OCI-LY7 (cell line): ENCODE measurements at regions of chr17 and their contacts with region 1.

Region 1: DNA sequence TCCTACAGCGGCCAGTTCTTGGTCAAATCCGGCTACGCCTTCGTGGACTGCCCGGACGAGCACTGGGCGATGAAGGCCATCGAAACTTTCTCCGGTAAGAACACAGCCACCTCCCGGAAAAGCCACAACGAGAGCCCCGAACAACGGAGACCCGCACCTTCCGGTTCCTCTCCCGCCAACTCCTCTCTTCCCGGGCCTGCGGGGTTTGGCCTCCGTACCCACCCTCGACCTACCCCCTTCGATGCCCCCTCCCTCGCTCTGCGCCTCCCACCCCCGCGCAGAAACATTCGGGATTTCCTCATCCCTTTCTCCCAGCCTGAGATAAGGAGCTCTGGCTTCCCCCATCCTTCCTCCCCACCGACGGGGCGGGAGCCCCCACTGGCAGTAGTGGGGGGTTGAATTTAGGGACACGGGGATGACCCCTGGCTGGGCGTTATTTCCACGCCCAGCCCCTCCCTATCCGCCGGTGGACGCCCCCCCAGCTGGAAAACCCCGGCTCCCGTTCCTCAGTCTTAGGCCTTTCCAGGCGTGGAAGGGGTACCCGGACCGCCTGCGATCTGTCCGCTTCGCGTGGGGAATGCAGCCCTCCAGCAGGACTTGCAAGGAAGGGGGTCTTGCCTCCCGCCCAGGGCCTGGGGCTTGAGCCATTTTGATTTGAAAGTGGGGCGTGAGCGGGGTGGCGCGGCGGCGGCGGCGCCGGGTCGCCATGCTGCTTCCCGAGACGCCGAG is 806 bp downstream of the IGF2BP1 start:
- DNase-seq: peak; percentile 35
- H3K4me3 ChIP-seq: peak overlapping the region; percentile 83
- H3K27ac ChIP-seq: peak overlapping the region; percentile 82
- H3K4me1 ChIP-seq: peaks cover 23% of the 10 kb centered on the region
- CTCF ChIP-seq: no peak

Region 2: GRCh38 chr17:48724251-48725003 is 273.6 kb before region 1 on chr17:
- CTCF ChIA-PET with region 1: no interaction called
- POLR2A ChIA-PET with region 1: no interaction called
- intact Hi-C with region 1: no loop called
- DNase-seq: peak; percentile 58
- H3K4me3 ChIP-seq: no peak overlapping the region
- H3K27ac ChIP-seq: no peak overlapping the region
- H3K4me1 ChIP-seq: no peaks in the 10 kb centered on the region
- CTCF ChIP-seq: peak; percentile 81

Region 3: GRCh38 chr17:48908047-48908843 is 89.7 kb before region 1 on chr17 and contains the start of gene UBE2Z:
- CTCF ChIA-PET with region 1: no interaction called
- POLR2A ChIA-PET with region 1: interaction called, 3 read pairs
- intact Hi-C with region 1: loop called (anchors 2 kb)
- DNase-seq: peak; percentile 95
- H3K4me3 ChIP-seq: peak within 1 kb of the TSS; percentile 99
- H3K27ac ChIP-seq: peak within 1 kb of the TSS; percentile 76
- H3K4me1 ChIP-seq: peaks cover 22% of the 10 kb centered on the region
- CTCF ChIP-seq: peak; percentile 62
- total RNA-seq, gene UBE2Z: 44.7 and 52.3 TPM in 2 replicates

Region 4: GRCh38 chr17:48985436-48986245 is 12.3 kb before region 1 on chr17:
- CTCF ChIA-PET with region 1: no interaction called
- POLR2A ChIA-PET with region 1: no interaction called
- intact Hi-C with region 1: no loop called
- DNase-seq: no peak
- H3K4me3 ChIP-seq: no peak overlapping the region
- H3K27ac ChIP-seq: no peak overlapping the region
- H3K4me1 ChIP-seq: no peaks in the 10 kb centered on the region
- CTCF ChIP-seq: no peak

Region 5: GRCh38 chr17:49299996-49300395 is 302.0 kb after region 1 on chr17:
- CTCF ChIA-PET with region 1: interaction called, 12 read pairs
- POLR2A ChIA-PET with region 1: no interaction called
- intact Hi-C with region 1: no loop called
- DNase-seq: no peak
- H3K4me3 ChIP-seq: no peak overlapping the region
- H3K27ac ChIP-seq: no peak overlapping the region
- H3K4me1 ChIP-seq: no peaks in the 10 kb centered on the region
- CTCF ChIP-seq: no peak